ENCODE measurements at regions of chr1 and their contacts with region 1.

Region 1: DNA sequence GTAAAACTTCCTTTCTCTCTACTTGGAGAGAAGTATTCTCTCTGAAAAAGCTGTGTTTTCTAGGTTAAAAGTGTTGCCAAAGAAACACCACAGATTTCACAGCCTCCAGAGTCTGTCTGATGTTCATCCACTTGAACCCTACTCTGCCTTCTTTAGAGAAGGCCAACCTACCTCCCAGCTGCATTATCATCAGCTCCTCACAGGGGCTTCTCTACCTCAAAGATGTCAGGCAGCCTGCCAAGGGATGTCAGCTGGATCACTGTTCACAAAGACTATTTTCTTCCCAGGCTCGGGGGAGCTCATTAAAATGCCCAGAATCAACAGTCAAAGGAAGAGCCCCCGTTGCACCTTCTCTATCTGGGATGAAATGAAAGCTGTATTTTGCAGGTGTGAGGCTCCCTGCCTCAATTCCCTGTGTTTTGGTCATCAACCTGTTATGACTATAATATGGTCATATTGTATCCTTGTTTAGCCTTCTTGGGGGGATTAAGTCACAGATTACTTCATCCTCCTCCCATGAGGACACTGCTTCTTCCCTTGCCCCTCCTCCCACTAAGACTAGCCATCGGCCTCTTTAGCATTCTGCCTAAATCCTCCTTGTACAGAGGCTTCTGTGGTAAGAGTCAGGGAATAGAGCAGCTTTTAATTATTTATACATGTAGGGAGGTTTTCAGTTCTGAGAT is 25.7 kb downstream of the ANGPTL7 start:
- DNase-seq: no peak
- H3K4me3 ChIP-seq: no peak overlapping the region
- H3K27ac ChIP-seq: no peak overlapping the region
- H3K4me1 ChIP-seq: no peaks in the 10 kb centered on the region
- H3K27me3 ChIP-seq: no peaks in the 10 kb centered on the region
- CTCF ChIP-seq: no peak

Region 2: DNA sequence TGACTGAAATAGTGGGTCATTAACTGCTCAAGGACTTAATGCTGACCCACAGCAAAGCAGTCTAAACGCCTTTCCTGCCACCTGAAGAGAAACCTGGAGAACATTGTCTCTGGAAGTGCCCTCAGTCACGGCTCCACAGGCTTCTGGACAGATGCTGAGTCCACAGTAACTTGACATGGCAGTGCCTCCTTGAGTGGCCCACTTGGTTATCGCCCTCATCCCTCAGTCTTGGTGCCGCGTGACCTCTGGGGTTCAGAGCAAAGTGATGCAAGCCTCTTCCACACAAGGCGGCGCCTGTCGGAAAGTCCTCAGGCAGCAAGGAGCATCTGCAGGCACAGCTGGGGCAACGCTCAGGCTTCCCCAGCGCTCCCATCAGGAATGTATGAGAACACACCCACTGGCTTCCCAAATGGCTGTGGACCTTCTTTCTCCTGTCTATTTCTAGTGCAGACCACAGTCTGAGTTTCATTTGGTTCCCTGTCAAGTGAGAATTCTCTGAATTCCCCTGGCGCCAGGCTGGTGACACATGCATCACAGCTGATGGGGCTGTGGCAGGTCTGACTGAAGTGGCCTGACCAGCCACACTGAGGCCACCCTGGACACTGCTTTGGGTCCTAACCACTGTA is 38.6 kb before region 1 on chr1:
- CTCF ChIA-PET with region 1: no interaction called
- dilution Hi-C with region 1: no loop called
- in situ Hi-C with region 1: no loop called
- intact Hi-C with region 1: no loop called
- DNase-seq: no peak
- H3K4me3 ChIP-seq: no peak overlapping the region
- H3K27ac ChIP-seq: no peak overlapping the region
- H3K4me1 ChIP-seq: peaks cover 3% of the 10 kb centered on the region
- H3K27me3 ChIP-seq: no peaks in the 10 kb centered on the region
- CTCF ChIP-seq: no peak

Region 3: GRCh38 chr1:11373895-11374747 is 159.3 kb after region 1 on chr1:
- CTCF ChIA-PET with region 1: no interaction called
- dilution Hi-C with region 1: loop called (anchors 10 kb)
- in situ Hi-C with region 1: no loop called
- intact Hi-C with region 1: no loop called
- DNase-seq: no peak
- H3K4me3 ChIP-seq: no peak overlapping the region
- H3K27ac ChIP-seq: no peak overlapping the region
- H3K4me1 ChIP-seq: peaks cover 12% of the 10 kb centered on the region
- H3K27me3 ChIP-seq: no peaks in the 10 kb centered on the region
- CTCF ChIP-seq: no peak